Esophagus squamous epithelium (tissue), 5 donors: ENCODE measurements at regions of chr12 and their contacts with region 1.

Region 1: GRCh38 chr12:109844983-109845823 is 12.0 kb upstream of the TRPV4 start:
- DNase-seq: no peak
- H3K4me3 ChIP-seq: peak overlapping the region in 3 of 4 donors; percentile 16 to 49 (median 20)
- H3K27ac ChIP-seq: peak overlapping the region in 2 of 4 donors; percentile 27 to 57
- H3K4me1 ChIP-seq: peaks cover 6 to 23% (median 7%) of the 10 kb centered on the region in 3 donors
- H3K27me3 ChIP-seq: no peaks in the 10 kb centered on the region
- CTCF ChIP-seq: peak; percentile 98 to 100 (median 98)
- POLR2A ChIP-seq: no peak

Region 2: DNA sequence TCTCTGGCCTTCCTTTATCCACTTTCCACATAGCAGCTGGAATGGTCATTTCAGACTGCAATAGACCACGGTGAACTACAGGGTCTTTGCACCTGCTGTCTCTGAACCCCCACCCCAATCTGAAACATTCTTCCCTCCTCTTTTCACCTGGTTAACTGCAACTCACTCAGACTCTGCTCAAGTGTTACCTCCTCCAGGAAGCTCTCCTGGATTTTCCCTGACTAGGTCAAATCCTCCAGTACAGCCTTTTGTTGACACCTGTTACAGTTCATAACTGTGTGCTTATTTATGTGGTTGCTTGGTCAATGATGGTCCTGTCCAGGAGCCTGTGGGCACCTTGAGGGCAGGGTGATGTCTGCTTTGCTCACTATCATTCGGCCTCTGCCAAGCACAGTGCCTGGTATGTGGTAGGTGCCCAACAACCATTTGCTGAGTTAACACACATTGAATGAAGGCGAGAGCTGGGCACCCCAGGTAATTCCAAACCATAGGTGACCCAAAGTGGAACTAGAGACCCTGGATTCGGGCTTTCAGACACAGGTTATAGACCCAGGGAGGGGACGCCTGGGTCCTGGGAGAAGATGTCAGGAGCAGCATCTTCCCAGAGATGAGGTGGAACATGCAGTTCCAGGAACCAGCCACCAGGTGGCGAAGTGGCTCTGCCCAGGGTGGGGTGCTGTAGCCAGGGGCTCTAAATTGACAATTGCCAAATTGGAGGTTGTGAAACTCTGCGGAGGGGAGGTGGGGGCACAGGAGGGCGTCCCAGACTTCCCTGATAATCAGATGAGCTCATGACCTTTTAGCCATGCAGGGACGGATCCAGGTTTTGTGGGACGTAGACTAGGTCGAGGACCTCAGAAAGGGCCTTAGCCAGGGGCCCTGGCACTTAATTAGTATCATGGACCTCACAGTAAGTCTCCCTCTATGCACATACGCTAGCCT is 40.1 kb before region 1 on chr12:
- intact Hi-C with region 1: loop called (anchors 5 kb)
- DNase-seq: no peak
- H3K4me3 ChIP-seq: no peak overlapping the region
- H3K27ac ChIP-seq: peak overlapping the region in 1 of 4 donors; percentile 5
- H3K4me1 ChIP-seq: no peaks in the 10 kb centered on the region
- H3K27me3 ChIP-seq: no peaks in the 10 kb centered on the region
- CTCF ChIP-seq: peak; percentile 90 to 99 (median 94)
- POLR2A ChIP-seq: no peak

Region 3: DNA sequence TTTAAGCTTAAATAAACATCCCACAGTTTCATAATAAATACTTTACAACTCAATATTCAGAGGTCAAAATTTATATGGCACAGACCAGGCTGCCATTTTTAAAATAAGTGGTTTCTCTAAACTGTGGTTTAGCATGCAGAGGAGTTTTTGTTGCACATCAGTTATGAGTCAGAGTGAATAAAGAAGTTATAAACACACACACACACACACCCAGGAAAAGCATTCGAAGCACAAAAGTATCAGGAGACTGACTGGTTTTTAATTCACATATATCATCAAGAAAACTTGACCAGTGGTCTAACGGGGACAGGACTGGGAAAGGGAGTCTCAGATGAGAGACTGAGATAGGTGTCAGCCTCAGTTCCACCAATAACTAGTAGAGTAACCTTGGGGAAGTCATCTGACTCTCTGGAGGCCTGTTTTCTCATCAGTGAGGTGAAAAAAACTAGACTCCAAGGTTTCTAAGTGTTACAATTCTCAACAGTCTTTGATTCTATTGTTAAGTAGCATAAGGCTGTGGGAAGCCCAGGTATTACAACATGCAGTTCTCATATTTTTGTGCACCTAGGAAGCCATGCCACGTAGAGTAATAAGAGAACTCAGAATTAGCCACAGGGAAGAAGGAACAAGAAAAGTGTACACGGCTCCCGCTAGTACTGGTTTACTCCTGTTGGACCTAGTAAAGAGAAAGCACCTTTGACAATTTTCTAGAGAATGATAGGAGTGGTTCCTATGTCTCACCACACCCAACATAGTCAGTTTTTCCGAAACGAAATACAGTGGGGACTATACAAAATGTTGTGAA is 732.7 kb after region 1 on chr12:
- intact Hi-C with region 1: no loop called
- DNase-seq: no peak
- H3K4me3 ChIP-seq: peak overlapping the region in 2 of 4 donors; percentile 14 to 42
- H3K27ac ChIP-seq: peak overlapping the region; percentile 84 to 95 (median 91)
- H3K4me1 ChIP-seq: peaks cover 32 to 84% (median 60%) of the 10 kb centered on the region in 3 donors
- H3K27me3 ChIP-seq: no peaks in the 10 kb centered on the region
- CTCF ChIP-seq: no peak
- POLR2A ChIP-seq: no peak